ENCODE measurements at regions of chr1 and their contacts with region 1.

Region 1: DNA sequence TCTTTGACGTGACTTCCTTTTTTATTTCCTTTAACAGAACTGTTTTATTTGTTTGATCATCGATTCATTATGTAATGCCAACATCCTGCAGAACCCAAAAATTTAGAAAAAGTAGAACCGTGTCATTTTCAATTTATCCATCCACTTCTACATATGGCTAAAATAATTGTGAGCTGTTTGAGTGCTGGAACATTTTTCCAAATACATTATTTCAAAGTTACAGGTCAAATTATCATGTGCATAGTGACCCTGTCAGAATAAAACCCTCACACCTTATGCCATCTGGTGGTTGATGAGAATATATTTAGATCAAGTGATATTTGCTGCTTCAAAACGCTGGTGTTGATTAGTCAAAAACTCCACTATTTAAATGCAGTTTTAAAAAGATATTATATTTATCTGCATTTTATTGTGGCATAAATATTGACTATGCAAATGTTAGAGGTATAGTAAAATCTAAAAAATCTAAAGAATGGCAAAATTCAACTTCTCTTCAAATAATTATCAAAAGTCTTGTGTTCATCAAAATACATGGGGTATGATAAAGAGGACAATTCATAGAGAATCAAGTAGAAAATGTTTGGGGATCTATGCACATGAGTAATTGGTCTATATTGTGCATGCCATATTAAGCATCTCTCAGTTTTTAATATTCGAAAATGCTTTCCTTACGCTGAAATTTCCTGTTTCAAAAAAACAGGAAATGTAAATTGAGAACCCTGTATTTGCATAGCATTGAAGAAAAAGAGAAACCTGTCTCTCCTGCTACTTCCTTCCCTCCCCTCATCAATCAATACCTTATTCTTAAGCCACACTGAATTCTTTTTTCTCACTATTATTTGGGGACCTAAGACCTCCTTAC is 39.7 kb downstream of the UBE2U start:
- DNase-seq: no peak

Region 2: DNA sequence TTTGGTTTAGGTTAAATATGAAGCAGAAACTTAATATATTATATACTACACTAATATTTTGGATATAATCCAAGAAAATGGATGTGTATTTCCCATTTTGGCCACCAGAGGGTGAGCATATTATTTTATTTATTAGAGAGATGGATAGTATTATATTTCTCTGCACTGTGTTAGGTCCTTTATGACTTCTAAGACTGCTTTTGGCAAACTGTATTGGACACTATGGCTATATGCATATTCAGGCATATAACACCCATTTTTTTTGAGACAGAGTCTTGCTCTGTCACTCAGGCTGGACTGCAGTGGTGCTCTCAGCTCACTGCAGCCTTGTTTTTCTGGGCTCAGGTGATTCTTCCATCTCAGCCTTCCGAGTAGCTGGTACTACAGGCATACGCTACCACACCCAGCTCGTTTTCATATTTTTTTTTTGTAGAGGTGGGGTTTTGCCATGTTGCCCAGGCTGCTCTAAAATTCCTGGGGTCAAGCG is 667.7 kb before region 1 on chr1:
- intact Hi-C with region 1: loop called in 1 of 2 experiments (anchors 10 kb)
- DNase-seq: no peak

Region 3: DNA sequence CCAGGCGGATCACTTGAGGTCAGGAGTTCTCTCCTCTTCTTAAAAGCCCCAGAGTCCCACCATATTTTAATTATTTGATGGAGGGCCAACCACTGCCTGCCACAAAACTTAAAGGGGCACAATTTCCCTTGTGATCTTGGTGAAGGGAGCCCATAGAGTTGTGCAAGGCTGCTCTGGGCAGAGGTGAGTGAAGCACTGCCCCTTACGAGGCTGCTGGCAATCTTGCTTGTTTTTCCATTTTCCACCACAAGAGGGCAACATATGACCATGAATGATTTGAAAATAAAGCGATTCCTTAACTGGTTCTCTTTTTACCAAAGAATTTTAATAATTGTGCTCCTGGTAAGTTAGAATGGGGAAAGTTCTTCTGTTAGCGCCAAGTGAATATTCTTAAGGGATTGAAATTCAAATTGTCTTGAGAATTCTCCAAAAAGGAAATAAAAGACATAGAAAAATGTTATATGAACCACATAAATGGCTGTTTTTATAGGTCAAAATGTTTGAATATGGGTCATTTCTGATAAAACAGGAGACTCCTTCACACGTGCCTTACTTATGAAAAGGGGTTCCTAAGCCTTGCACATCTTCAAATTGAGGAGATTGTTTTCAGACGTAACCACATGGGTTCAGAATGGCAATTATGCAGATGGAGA is 627.2 kb before region 1 on chr1:
- intact Hi-C with region 1: loop called (anchors 5 to 10 kb)
- DNase-seq: no peak

Region 4: GRCh38 chr1:63674238-63674864 is 568.8 kb before region 1 on chr1:
- intact Hi-C with region 1: loop called in 1 of 2 experiments (anchors 10 kb)
- DNase-seq: peak; percentile 85

Region 5: DNA sequence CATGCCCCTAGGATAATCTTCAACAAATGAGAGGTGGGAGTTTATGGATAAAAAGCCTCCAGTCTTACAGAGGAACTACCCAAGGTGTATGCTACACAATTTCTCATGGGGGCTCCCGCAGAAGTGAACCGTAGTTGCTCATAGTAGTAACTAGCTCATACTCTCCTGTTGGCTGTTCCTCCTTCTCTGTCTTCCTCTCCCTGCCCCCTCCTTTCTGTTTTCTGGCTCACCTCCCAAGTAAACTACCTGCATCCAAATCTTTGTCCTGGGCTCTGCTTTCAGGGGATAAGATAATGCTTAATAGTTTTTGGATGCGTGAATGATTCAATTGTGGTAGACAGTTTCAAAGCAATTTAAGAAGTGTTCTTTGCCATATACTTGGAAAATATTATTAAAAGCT is 559.4 kb before region 1 on chr1:
- intact Hi-C with region 1: loop called (anchors 5 to 10 kb)
- DNase-seq: no peak

Region 6: GRCh38 chr1:64440183-64440826 is 197.2 kb after region 1 on chr1:
- intact Hi-C with region 1: no loop called
- DNase-seq: no peak